A549 (cell line): ENCODE measurements at regions of chr12 and their contacts with region 1.

Region 1: DNA sequence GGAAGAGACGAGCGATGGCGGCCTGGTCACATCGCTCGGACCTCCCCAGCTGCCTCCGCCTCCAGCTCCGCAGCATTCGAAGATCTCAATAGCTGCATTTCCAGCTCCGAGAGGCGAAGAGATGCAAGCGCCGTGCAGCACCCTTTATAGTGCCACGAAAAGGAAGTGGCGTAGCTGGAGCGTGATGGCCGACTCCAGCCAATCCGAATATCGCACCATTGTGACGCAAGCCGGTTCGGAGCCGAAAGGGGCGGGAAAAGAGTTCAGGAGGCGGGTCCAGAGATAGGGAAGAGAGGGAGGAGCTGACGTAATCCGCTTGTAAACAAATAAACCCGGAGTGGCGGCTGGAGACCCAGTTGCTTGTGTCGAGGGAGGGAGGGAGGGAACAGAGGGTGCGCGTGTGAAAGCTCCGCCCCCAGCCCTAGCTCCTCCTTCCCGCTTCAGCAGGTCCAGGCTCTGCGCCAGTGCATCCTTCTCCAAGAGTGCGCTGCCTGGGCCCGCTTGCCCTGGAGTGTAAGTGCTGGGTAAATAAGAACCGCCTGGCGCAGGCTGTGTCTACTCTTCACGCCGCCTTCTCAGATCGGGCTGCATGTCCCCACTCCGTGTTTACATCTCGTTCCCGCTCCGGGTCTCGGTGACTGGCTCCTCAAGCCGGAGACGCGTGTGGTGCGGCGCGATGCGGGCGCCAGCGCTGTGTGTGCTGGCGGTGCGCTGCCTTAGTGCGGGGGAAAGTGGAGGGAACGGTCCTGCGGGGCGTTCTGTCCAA is at the start of gene BTG1:
- DNase-seq: peak; percentile 95 to 100
- ATAC-seq: peak; percentile 82 to 85
- H3K4me3 ChIP-seq: peak within 1 kb of the TSS; percentile 91
- H3K27ac ChIP-seq: peak within 1 kb of the TSS; percentile 92 to 98
- H3K4me1 ChIP-seq: peaks cover 10% of the 10 kb centered on the region
- CTCF ChIP-seq: no peak
- EP300 ChIP-seq: no peak
- POLR2A ChIP-seq: peak; percentile 100
- RAD21 ChIP-seq: peak; percentile 35 to 37; a peak in 4 of 5 replicates
- polyA plus RNA-seq, gene BTG1: 138 and 215 TPM in 2 replicates

Region 2: DNA sequence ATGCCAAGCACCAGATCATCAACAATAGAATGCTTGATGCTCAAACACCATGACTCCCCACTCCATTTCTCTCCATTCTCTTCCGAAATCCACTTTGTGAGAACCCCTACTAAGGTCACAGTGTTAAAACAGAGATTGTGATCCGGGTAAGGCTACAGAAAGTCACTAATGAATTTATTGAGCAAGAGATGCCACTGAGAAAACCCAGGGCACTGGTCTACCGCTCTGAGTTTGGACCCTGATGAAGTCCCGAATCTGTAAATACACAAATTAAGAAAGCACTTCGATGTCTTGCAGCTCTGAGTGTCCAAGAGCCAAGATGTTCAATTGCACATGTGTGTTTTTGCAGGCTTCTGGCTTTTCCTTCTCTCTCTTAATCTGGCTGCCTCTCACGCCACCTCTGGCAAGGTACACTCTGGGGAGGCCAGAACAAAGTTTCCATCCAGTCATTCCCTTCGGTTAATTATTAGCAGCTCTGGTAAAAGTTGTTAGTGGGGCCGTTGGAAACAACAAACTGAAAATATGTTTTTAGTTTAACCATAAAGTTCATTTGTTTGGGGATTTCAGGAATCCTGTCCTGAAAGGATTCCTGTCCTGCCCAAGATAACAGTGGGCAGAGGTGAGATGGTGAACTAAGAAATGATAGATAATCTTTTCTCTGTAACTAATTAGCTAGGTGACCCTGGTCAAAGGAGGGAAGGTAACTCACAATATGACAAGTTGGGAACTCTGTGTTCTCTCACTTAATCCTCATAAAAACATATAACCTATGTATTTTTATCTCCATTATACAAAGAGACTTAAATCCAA is 75.7 kb before region 1 on chr12:
- CTCF ChIA-PET with region 1: no interaction called
- POLR2A ChIA-PET with region 1: interaction called, 24 read pairs
- DNase-seq: peak; percentile 63 to 88
- ATAC-seq: peak; percentile 86 to 90
- H3K4me3 ChIP-seq: no peak overlapping the region; the same call in 2 of the 3 replicates
- H3K27ac ChIP-seq: peak overlapping the region; percentile 78 to 87
- H3K4me1 ChIP-seq: peaks cover 60% of the 10 kb centered on the region
- CTCF ChIP-seq: no peak; the same call in 2 of the 3 replicates
- EP300 ChIP-seq: no peak; a peak in 1 of 5 replicates
- POLR2A ChIP-seq: no peak
- RAD21 ChIP-seq: peak; percentile 47 to 64

Region 3: GRCh38 chr12:92185052-92185451 is 39.1 kb after region 1 on chr12:
- CTCF ChIA-PET with region 1: no interaction called
- POLR2A ChIA-PET with region 1: no interaction called
- DNase-seq: no peak
- ATAC-seq: no peak
- H3K4me3 ChIP-seq: no peak overlapping the region
- H3K27ac ChIP-seq: no peak overlapping the region
- H3K4me1 ChIP-seq: no peaks in the 10 kb centered on the region
- CTCF ChIP-seq: no peak
- EP300 ChIP-seq: no peak
- POLR2A ChIP-seq: no peak
- RAD21 ChIP-seq: no peak

Region 4: GRCh38 chr12:92439407-92439779 is 293.5 kb after region 1 on chr12:
- CTCF ChIA-PET with region 1: interaction called, 3 read pairs
- POLR2A ChIA-PET with region 1: interaction called, 21 read pairs
- DNase-seq: peak; percentile 46 to 66
- ATAC-seq: peak; percentile 96 to 97
- H3K4me3 ChIP-seq: no peak overlapping the region
- H3K27ac ChIP-seq: peak overlapping the region; percentile 57 to 81
- H3K4me1 ChIP-seq: peaks cover 26% of the 10 kb centered on the region
- CTCF ChIP-seq: no peak
- EP300 ChIP-seq: peak; percentile 36 to 58; a peak in 2 of 5 replicates
- POLR2A ChIP-seq: no peak
- RAD21 ChIP-seq: peak in 1 of 2 experiments; percentile 41; a peak in 2 of 5 replicates

Region 5: DNA sequence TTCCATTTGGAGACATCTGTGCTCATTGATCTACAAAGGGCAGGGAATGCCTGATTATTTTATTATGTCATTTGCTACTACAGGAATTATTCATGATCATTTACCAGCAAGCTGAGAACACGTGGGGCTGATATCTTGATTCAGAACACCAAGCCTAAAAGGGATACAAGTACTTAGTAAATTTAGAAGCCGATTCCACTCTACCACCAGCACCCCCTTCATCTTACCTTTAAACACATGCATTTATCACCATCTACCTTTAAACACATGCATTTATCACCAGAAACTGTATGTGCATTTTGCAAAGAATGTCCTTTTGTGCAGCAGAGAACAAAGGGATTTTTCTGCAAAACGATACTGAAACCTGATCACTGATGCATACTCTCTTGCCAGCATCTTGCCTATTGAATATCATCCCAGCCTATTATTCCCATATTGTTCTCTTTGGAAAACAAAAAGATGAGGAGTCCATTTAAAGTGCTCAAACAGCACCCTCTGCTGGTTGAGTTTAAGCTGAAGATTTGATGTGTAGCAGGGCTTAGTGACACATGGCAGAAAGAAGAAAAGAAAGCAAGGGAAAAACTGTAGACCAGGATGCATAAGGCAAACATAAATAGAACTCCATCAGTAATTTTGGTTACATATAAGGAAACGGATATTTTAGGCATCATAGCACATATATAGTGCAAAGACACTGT is 424.3 kb after region 1 on chr12:
- CTCF ChIA-PET with region 1: interaction called, 18 read pairs
- POLR2A ChIA-PET with region 1: interaction called, 42 read pairs
- DNase-seq: peak; percentile 57 to 88
- ATAC-seq: peak; percentile 78 to 91
- H3K4me3 ChIP-seq: no peak overlapping the region
- H3K27ac ChIP-seq: peak overlapping the region; percentile 49 to 66
- H3K4me1 ChIP-seq: peaks cover 17% of the 10 kb centered on the region
- CTCF ChIP-seq: peak; percentile 97
- EP300 ChIP-seq: no peak
- POLR2A ChIP-seq: no peak
- RAD21 ChIP-seq: peak; percentile 94 to 97

Region 6: GRCh38 chr12:92614502-92614901 is 468.6 kb after region 1 on chr12:
- CTCF ChIA-PET with region 1: no interaction called
- POLR2A ChIA-PET with region 1: interaction called, 10 read pairs
- DNase-seq: no peak
- ATAC-seq: no peak
- H3K4me3 ChIP-seq: no peak overlapping the region
- H3K27ac ChIP-seq: peak overlapping the region in 1 of 2 experiments; percentile 17; a peak in 2 of 6 replicates
- H3K4me1 ChIP-seq: peaks cover 6% of the 10 kb centered on the region
- CTCF ChIP-seq: no peak
- EP300 ChIP-seq: no peak
- POLR2A ChIP-seq: no peak
- RAD21 ChIP-seq: no peak